ENCODE measurements at regions of chr20 and their contacts with region 1.

Region 1: GRCh38 chr20:1466211-1467081 is at the start of gene NSFL1C:
- DNase-seq: peak; percentile 78 to 97
- H3K4me3 ChIP-seq: peak within 1 kb of the TSS; percentile 67 to 81
- H3K27ac ChIP-seq: peak within 1 kb of the TSS; percentile 80
- H3K4me1 ChIP-seq: peaks cover 14 to 35% of the 10 kb centered on the region in 2 donors
- H3K27me3 ChIP-seq: no peaks in the 10 kb centered on the region
- CTCF ChIP-seq: peak; percentile 95 to 97 (median 95)
- total RNA-seq, gene NSFL1C: 58.5 TPM

Region 2: GRCh38 chr20:653110-653589 is 813.3 kb before region 1 on chr20 and contains the start of gene SRXN1:
- intact Hi-C with region 1: loop called (anchors 5 kb)
- DNase-seq: peak; percentile 67 to 95
- H3K4me3 ChIP-seq: peak within 1 kb of the TSS; percentile 61 to 84
- H3K27ac ChIP-seq: peak within 1 kb of the TSS; percentile 82 to 84
- H3K4me1 ChIP-seq: peaks cover 9% of the 10 kb centered on the region in 2 donors
- H3K27me3 ChIP-seq: no peaks in the 10 kb centered on the region
- CTCF ChIP-seq: peak in 2 of 3 experiments; percentile 37 to 53
- total RNA-seq, gene SRXN1: 28.8 TPM

Region 3: DNA sequence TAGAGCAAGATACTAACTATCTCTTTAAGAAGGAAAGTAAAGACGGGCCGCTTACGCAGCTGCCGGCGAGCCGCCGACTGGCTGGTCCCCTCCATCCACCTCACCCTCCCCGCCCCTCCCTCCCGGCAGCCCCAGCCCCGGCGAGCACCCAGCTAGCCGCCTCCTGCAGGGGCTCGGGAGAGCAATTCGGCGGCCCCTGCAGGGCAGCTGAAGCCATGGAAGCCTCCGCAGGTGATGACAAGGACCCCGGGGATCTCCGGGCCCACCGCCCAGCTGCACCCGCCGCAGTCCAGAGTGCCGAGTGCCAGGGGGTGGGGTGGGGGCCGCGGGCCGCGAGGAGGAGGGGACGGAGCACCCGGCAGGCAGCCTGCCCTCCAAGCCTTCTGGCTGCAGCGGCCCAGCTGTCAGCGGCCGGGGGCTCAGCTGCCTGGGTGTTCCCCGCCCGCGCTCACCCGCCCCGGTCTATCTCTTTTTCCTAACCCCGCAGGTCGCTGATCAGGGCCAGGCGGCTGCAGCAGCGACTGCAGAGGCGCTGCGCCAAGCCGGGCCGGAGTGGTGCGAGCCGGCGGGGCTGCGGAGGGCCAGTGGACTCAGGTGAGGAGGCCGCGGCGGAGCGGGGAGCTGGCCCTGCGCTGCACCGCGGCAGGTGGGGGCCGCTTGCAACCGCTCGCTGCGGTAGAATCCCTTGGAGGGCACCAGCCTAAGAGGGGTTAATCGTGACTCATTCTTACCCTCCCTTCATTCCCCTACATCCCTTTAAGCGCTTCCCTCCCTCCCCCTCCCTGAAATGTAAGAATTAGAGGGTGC is 200.1 kb before region 1 on chr20 and contains the start of gene SNPH:
- intact Hi-C with region 1: loop called (anchors 1 kb)
- DNase-seq: peak in 1 of 2 donors; percentile 86
- H3K4me3 ChIP-seq: peak within 1 kb of the TSS; percentile 84 to 98
- H3K27ac ChIP-seq: peak within 1 kb of the TSS; percentile 58 to 66
- H3K4me1 ChIP-seq: peaks cover 5 to 11% of the 10 kb centered on the region in 2 donors
- H3K27me3 ChIP-seq: no peaks in the 10 kb centered on the region
- CTCF ChIP-seq: no peak
- total RNA-seq, gene SNPH: 10.4 TPM

Region 4: GRCh38 chr20:1392823-1393506 is 73.5 kb before region 1 on chr20 and contains the start of gene FKBP1A:
- intact Hi-C with region 1: loop called (anchors 1 kb)
- DNase-seq: peak; percentile 51 to 94
- H3K4me3 ChIP-seq: peak within 1 kb of the TSS; percentile 80 to 92
- H3K27ac ChIP-seq: peak within 1 kb of the TSS; percentile 84 to 86
- H3K4me1 ChIP-seq: peaks cover 13 to 41% of the 10 kb centered on the region in 2 donors
- H3K27me3 ChIP-seq: no peaks in the 10 kb centered on the region
- CTCF ChIP-seq: peak in 2 of 3 experiments; percentile 13 to 19
- total RNA-seq, gene FKBP1A: 202 TPM

Region 5: GRCh38 chr20:2101865-2102584 is 635.6 kb after region 1 on chr20:
- intact Hi-C with region 1: loop called (anchors 2 kb)
- DNase-seq: peak; percentile 68 to 95
- H3K4me3 ChIP-seq: peak overlapping the region; percentile 84 to 96
- H3K27ac ChIP-seq: peak overlapping the region; percentile 99
- H3K4me1 ChIP-seq: peaks cover 0 to 25% of the 10 kb centered on the region in 2 donors
- H3K27me3 ChIP-seq: no peaks in the 10 kb centered on the region
- CTCF ChIP-seq: no peak

Region 6: GRCh38 chr20:2651772-2652723 is 1185.6 kb after region 1 on chr20 and contains the start of gene NOP56:
- intact Hi-C with region 1: loop called (anchors 10 kb)
- DNase-seq: peak; percentile 48 to 94
- H3K4me3 ChIP-seq: peak within 1 kb of the TSS; percentile 69 to 87
- H3K27ac ChIP-seq: peak within 1 kb of the TSS; percentile 81 to 82
- H3K4me1 ChIP-seq: peaks cover 9 to 15% of the 10 kb centered on the region in 2 donors
- H3K27me3 ChIP-seq: no peaks in the 10 kb centered on the region
- CTCF ChIP-seq: no peak
- total RNA-seq, gene NOP56: 32.1 TPM

Measured in ascending aorta (tissue), 2 donors.